Activated CD4-positive, alpha-beta T cell treated with anti-CD3 and anti-CD28 coated beads for 36 hours (primary cell): ENCODE measurements at regions of chr17 and their contacts with region 1.

Region 1: DNA sequence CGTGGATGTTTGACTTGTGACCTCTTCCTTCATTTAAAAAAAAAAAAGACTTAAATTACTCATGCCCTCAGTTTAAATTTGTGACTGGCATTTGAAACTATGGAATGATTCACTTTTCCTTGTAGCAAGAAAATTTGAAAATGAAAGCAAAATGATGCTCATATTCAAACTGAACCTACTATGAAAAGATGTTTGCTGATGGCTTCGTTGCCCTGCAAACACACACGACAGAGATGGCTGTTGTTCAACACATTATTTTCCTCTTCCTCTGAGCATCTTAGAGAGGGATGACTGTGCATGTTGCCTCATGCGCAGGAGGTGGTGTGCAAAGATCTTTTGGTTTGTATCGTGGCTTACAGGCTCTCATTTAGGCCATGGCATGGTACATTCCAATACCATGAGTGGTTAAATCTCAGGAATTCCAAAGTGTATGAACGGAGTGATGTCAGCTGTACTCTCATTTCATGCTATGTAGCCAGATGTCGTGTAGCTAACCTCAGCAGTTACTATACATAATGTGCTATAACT is 164.5 kb downstream of the PRKCA start:
- DNase-seq: peak; percentile 85
- ATAC-seq: peak; percentile 91
- H3K4me3 Mint-ChIP-seq: peak overlapping the region; percentile 36
- H3K27ac Mint-ChIP-seq: peak overlapping the region; percentile 92
- H3K4me1 Mint-ChIP-seq: peaks cover 81% of the 10 kb centered on the region
- H3K27me3 Mint-ChIP-seq: no peaks in the 10 kb centered on the region

Region 2: DNA sequence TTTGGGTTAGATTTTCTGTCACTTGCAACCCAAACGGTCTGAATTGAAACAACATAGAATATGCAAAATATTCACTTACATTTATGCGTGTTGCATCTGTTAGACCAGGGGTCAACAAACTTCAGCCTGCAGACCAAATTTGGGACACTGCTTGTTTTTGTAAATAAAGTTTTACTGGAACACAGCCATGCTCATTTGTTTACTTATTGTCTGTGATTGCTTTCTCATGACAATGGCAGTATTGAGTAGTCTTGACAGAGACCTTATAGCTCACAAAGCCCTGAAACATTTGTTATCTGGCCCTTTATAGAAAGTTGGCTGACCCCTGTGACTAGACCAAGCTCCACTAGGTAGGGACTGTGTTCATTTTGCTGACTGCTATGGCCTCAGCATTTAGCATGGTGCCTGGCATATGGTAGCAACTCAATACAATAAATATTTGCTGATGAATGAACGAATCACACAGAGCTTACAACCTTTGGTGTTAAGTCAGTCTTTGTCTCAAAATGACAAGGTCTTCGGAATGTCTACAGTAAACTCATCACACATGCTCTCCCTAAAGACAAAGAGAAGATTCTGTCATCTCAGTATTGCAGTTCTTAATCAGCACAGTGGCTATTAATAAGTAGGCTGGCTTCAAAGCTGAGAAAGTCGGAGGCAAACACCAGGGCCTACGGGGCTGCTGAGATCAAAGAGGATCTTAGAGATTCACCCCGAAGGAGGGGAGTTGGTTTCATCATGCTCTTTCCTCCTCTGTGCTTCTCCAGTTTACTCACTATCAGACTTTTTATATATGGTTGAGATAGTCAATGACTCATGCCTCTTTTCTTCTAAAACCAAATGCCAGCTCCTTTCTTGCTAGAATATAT is 810.3 kb before region 1 on chr17:
- CTCF ChIA-PET with region 1: no interaction called
- POLR2A ChIA-PET with region 1: no interaction called
- intact Hi-C with region 1: loop called in 1 of 2 experiments (anchors 1 kb)
- DNase-seq: peak; percentile 80
- ATAC-seq: peak; percentile 98
- H3K4me3 Mint-ChIP-seq: no peak overlapping the region
- H3K27ac Mint-ChIP-seq: peak overlapping the region; percentile 74
- H3K4me1 Mint-ChIP-seq: peaks cover 33% of the 10 kb centered on the region
- H3K27me3 Mint-ChIP-seq: peaks cover 4% of the 10 kb centered on the region

Region 3: GRCh38 chr17:66310528-66311148 is 156.3 kb before region 1 on chr17:
- CTCF ChIA-PET with region 1: interaction called, 4 read pairs
- POLR2A ChIA-PET with region 1: interaction called, 4 read pairs
- intact Hi-C with region 1: loop called (anchors 1 kb)
- DNase-seq: peak; percentile 69
- ATAC-seq: peak; percentile 50
- H3K4me3 Mint-ChIP-seq: peak overlapping the region; percentile 5
- H3K27ac Mint-ChIP-seq: peak overlapping the region; percentile 100
- H3K4me1 Mint-ChIP-seq: peaks cover 93% of the 10 kb centered on the region
- H3K27me3 Mint-ChIP-seq: no peaks in the 10 kb centered on the region

Region 4: DNA sequence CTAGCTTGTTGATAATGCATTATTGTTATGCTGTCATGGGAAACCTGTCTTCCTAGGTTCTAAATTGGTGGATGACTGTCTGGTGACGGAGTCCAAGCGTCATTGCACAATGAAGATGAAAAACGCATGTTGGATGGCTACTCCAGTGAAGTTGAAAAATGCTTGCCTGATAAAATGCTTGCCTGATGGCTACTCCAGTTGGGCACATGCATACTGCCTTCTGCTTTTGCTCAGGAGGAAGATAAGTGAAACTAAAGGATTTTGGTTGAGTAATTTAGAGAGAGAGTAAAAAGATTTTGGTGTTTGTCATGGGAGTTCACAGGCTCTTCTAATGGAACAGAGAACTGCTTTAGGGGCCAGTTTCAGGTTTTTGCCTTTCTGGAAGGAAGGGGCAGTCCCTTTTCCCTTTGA is 45.9 kb before region 1 on chr17:
- CTCF ChIA-PET with region 1: no interaction called
- POLR2A ChIA-PET with region 1: interaction called, 13 read pairs
- intact Hi-C with region 1: no loop called
- DNase-seq: no peak
- ATAC-seq: peak; percentile 60
- H3K4me3 Mint-ChIP-seq: no peak overlapping the region
- H3K27ac Mint-ChIP-seq: no peak overlapping the region
- H3K4me1 Mint-ChIP-seq: peaks cover 75% of the 10 kb centered on the region
- H3K27me3 Mint-ChIP-seq: no peaks in the 10 kb centered on the region

Region 5: GRCh38 chr17:66547117-66547865 is 80.4 kb after region 1 on chr17:
- CTCF ChIA-PET with region 1: no interaction called
- POLR2A ChIA-PET with region 1: interaction called, 3 read pairs
- intact Hi-C with region 1: loop called (anchors 1 kb)
- DNase-seq: no peak
- ATAC-seq: peak; percentile 80
- H3K4me3 Mint-ChIP-seq: no peak overlapping the region
- H3K27ac Mint-ChIP-seq: peak overlapping the region; percentile 81
- H3K4me1 Mint-ChIP-seq: peaks cover 63% of the 10 kb centered on the region
- H3K27me3 Mint-ChIP-seq: no peaks in the 10 kb centered on the region

Region 6: GRCh38 chr17:66673668-66674315 is 206.9 kb after region 1 on chr17:
- CTCF ChIA-PET with region 1: no interaction called
- POLR2A ChIA-PET with region 1: no interaction called
- intact Hi-C with region 1: loop called (anchors 1 to 2 kb)
- DNase-seq: peak; percentile 63
- ATAC-seq: peak; percentile 80
- H3K4me3 Mint-ChIP-seq: peak overlapping the region; percentile 6
- H3K27ac Mint-ChIP-seq: peak overlapping the region; percentile 84
- H3K4me1 Mint-ChIP-seq: peaks cover 61% of the 10 kb centered on the region
- H3K27me3 Mint-ChIP-seq: no peaks in the 10 kb centered on the region

Region 7: GRCh38 chr17:66829386-66829864 is 362.5 kb after region 1 on chr17:
- CTCF ChIA-PET with region 1: no interaction called
- POLR2A ChIA-PET with region 1: no interaction called
- intact Hi-C with region 1: no loop called
- DNase-seq: peak; percentile 49
- ATAC-seq: no peak
- H3K4me3 Mint-ChIP-seq: no peak overlapping the region
- H3K27ac Mint-ChIP-seq: no peak overlapping the region
- H3K4me1 Mint-ChIP-seq: no peaks in the 10 kb centered on the region
- H3K27me3 Mint-ChIP-seq: peaks cover 55% of the 10 kb centered on the region